ENCODE measurements at regions of chr10 and their contacts with region 1.

Region 1: GRCh38 chr10:114499630-114500190 is 95.4 kb upstream of the AFAP1L2 start:
- DNase-seq: peak in 11 of 14 experiments; percentile 24 to 75 (median 57)
- ATAC-seq: peak; percentile 61
- H3K4me3 ChIP-seq: peak overlapping the region; percentile 5
- H3K4me3 Mint-ChIP-seq: peak overlapping the region; percentile 72
- H3K27ac ChIP-seq: peak overlapping the region; percentile 64 to 66
- H3K27ac Mint-ChIP-seq: peak overlapping the region; percentile 66
- H3K4me1 ChIP-seq: peaks cover 68% of the 10 kb centered on the region
- H3K4me1 Mint-ChIP-seq: peaks cover 96% of the 10 kb centered on the region
- H3K27me3 ChIP-seq: no peaks in the 10 kb centered on the region
- H3K27me3 Mint-ChIP-seq: no peaks in the 10 kb centered on the region
- CTCF ChIP-seq: no peak

Region 2: GRCh38 chr10:114103284-114103683 is 396.4 kb before region 1 on chr10:
- CTCF ChIA-PET with region 1: no interaction called
- POLR2A ChIA-PET with region 1: no interaction called
- intact Hi-C with region 1: no loop called
- DNase-seq: peak in 3 of 14 experiments; percentile 52 to 62 (median 59)
- ATAC-seq: no peak
- H3K4me3 ChIP-seq: no peak overlapping the region
- H3K4me3 Mint-ChIP-seq: no peak overlapping the region
- H3K27ac ChIP-seq: no peak overlapping the region
- H3K27ac Mint-ChIP-seq: no peak overlapping the region
- H3K4me1 ChIP-seq: peaks cover 20% of the 10 kb centered on the region
- H3K4me1 Mint-ChIP-seq: peaks cover 31% of the 10 kb centered on the region
- H3K27me3 ChIP-seq: peaks cover 15 to 19% of the 10 kb centered on the region in 2 experiments
- H3K27me3 Mint-ChIP-seq: peaks cover 44% of the 10 kb centered on the region
- CTCF ChIP-seq: peak; percentile 65

Region 3: DNA sequence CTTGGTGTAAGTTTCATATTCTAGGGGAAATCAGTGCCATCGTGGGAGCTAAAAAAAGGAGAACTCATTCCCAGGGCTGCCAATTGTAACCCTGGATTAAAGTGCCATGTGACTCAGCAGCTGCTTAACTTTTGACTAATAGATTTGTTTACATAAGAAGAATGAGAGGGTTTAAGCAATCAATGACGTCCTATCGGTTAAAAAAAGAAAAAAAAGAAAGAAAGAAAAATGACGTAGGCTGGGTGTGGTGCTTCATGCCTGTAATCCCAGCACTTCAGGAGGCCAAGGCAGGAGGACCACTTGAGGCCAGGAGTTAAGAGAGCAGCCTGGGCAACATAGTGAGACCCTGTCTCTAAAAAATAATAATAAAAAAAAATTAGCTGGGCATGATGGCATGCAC is 20.7 kb after region 1 on chr10:
- CTCF ChIA-PET with region 1: interaction called, 10 read pairs
- POLR2A ChIA-PET with region 1: interaction called, 66 read pairs
- intact Hi-C with region 1: loop called (anchors 2 kb)
- DNase-seq: peak in 3 of 14 experiments; percentile 29 to 43 (median 41)
- ATAC-seq: peak; percentile 19
- H3K4me3 ChIP-seq: no peak overlapping the region
- H3K4me3 Mint-ChIP-seq: peak overlapping the region; percentile 82
- H3K27ac ChIP-seq: peak overlapping the region; percentile 32 to 95
- H3K27ac Mint-ChIP-seq: peak overlapping the region; percentile 96
- H3K4me1 ChIP-seq: peaks cover 81% of the 10 kb centered on the region
- H3K4me1 Mint-ChIP-seq: peaks cover 98% of the 10 kb centered on the region
- H3K27me3 ChIP-seq: no peaks in the 10 kb centered on the region
- H3K27me3 Mint-ChIP-seq: no peaks in the 10 kb centered on the region
- CTCF ChIP-seq: no peak

Region 4: GRCh38 chr10:114541081-114541796 is 41.5 kb after region 1 on chr10:
- CTCF ChIA-PET with region 1: interaction called, 4 read pairs
- POLR2A ChIA-PET with region 1: interaction called, 15 read pairs
- intact Hi-C with region 1: loop called (anchors 1 to 5 kb)
- DNase-seq: peak; percentile 58 to 93 (median 68)
- ATAC-seq: peak; percentile 76
- H3K4me3 ChIP-seq: peak overlapping the region; percentile 8
- H3K4me3 Mint-ChIP-seq: peak overlapping the region; percentile 50
- H3K27ac ChIP-seq: peak overlapping the region; percentile 86 to 92
- H3K27ac Mint-ChIP-seq: peak overlapping the region; percentile 96
- H3K4me1 ChIP-seq: peaks cover 92% of the 10 kb centered on the region
- H3K4me1 Mint-ChIP-seq: peaks cover 96% of the 10 kb centered on the region
- H3K27me3 ChIP-seq: no peaks in the 10 kb centered on the region
- H3K27me3 Mint-ChIP-seq: no peaks in the 10 kb centered on the region
- CTCF ChIP-seq: no peak

Measured in CD4-positive, alpha-beta T cell (primary cell).